CD8-positive, alpha-beta T cell (primary cell): ENCODE measurements at regions of chr3 and their contacts with region 1.

Region 1: GRCh38 chr3:47513125-47513929 is at the start of gene ELP6:
- DNase-seq: peak; percentile 92 to 99 (median 96)
- ATAC-seq: peak; percentile 91
- H3K4me3 ChIP-seq: peak within 1 kb of the TSS; percentile 85 to 99
- H3K4me3 Mint-ChIP-seq: peak within 1 kb of the TSS; percentile 98
- H3K27ac ChIP-seq: peak within 1 kb of the TSS; percentile 88 to 95
- H3K27ac Mint-ChIP-seq: peak within 1 kb of the TSS; percentile 97
- H3K4me1 ChIP-seq: peaks cover 11% of the 10 kb centered on the region
- H3K4me1 Mint-ChIP-seq: peaks cover 22% of the 10 kb centered on the region
- H3K27me3 ChIP-seq: no peaks in the 10 kb centered on the region
- H3K27me3 Mint-ChIP-seq: no peaks in the 10 kb centered on the region
- CTCF ChIP-seq: peak; percentile 66
- total RNA-seq, gene ELP6: 13.0 to 13.7 TPM

Region 2: DNA sequence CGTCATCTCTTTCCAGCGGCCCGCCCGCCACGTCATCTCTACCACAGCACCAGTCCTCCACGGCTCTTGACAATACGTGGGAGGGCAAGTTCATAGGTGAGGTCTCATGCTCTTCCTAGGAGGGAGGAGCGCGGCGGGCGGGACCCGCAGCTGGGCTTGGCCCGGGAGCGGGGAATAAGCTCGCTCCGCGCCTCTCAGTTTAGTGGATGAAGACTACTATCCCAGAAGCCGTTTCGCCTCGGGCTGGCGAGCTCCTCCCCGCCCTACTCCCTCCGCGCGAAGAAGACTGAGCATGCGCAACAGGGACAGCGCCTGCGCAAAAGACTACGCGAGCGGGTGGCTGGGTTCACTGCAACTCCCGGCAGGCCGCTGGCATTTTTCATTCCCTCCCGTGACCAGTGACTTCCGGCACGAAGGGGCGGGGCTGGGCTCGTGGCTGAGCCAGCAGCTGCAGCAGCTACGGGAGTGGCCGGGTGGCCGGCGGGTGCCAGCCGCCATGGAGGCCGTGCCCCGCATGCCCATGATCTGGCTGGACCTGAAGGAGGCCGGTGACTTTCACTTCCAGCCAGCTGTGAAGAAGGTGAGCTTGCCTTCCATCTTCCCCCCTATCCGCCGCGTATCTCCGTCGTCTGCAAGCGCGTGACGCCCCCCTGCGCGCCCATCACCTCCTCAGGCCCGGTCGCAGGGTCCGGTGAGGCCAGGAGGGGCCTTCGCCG is 132.6 kb before region 1 on chr3 and contains the start of gene PTPN23:
- CTCF ChIA-PET with region 1: no interaction called
- POLR2A ChIA-PET with region 1: interaction called, 5 read pairs
- intact Hi-C with region 1: loop called (anchors 1 kb)
- DNase-seq: peak; percentile 97 to 99 (median 99)
- ATAC-seq: peak; percentile 77
- H3K4me3 ChIP-seq: peak within 1 kb of the TSS; percentile 59 to 86
- H3K4me3 Mint-ChIP-seq: peak within 1 kb of the TSS; percentile 99
- H3K27ac ChIP-seq: peak within 1 kb of the TSS; percentile 76 to 97
- H3K27ac Mint-ChIP-seq: peak within 1 kb of the TSS; percentile 100
- H3K4me1 ChIP-seq: peaks cover 30% of the 10 kb centered on the region
- H3K4me1 Mint-ChIP-seq: peaks cover 49% of the 10 kb centered on the region
- H3K27me3 ChIP-seq: no peaks in the 10 kb centered on the region
- H3K27me3 Mint-ChIP-seq: no peaks in the 10 kb centered on the region
- CTCF ChIP-seq: no peak
- total RNA-seq, gene PTPN23: 39.2 to 48.3 TPM

Region 3: DNA sequence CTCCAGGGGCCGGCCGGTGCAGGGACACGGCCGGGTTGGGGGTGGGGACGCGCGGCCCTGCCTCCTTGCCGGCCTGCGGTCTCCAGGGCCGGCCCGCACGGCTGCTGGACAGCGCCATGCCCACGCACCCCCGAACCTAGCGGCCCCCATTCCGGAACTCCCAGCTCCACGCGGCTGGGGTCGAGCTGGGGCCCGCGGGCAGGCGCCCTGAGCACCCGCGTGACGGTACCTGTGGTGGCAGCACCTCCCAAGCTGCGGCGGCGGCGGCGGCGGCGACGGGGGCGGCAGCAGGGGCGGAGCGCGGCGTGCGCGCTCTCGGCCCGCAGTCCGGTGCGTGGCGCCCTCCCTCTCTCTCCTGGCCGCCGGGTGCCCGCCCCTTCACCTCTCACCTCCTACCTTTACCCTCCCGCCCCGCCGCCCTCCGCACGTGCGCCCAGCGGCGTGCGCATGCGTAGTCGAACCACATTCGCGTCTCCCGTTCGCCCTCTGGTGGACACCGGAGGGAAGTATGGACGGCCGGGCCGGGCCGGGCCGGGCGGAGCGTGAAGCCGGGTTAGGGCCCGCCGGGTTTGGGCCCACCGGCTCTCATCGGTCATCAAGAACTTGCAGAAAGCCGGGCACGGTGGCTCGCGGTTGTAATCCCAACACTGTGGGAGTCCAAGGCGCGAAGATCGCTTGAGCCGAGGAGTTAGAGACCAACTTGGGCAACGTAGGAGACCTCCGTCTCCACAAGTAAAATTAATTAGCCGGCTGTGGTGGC is 37.6 kb before region 1 on chr3 and contains the start of gene SCAP:
- CTCF ChIA-PET with region 1: interaction called, 6 read pairs
- POLR2A ChIA-PET with region 1: interaction called, 4 read pairs
- intact Hi-C with region 1: loop called (anchors 1 kb)
- DNase-seq: peak; percentile 90 to 98 (median 96)
- ATAC-seq: peak; percentile 90
- H3K4me3 ChIP-seq: peak within 1 kb of the TSS; percentile 58 to 83
- H3K4me3 Mint-ChIP-seq: peak within 1 kb of the TSS; percentile 93
- H3K27ac ChIP-seq: peak within 1 kb of the TSS; percentile 69 to 86
- H3K27ac Mint-ChIP-seq: peak within 1 kb of the TSS; percentile 94
- H3K4me1 ChIP-seq: peaks cover 28% of the 10 kb centered on the region
- H3K4me1 Mint-ChIP-seq: peaks cover 43% of the 10 kb centered on the region
- H3K27me3 ChIP-seq: no peaks in the 10 kb centered on the region
- H3K27me3 Mint-ChIP-seq: no peaks in the 10 kb centered on the region
- CTCF ChIP-seq: peak; percentile 97
- total RNA-seq, gene SCAP: 72.8 to 76.6 TPM

Region 4: DNA sequence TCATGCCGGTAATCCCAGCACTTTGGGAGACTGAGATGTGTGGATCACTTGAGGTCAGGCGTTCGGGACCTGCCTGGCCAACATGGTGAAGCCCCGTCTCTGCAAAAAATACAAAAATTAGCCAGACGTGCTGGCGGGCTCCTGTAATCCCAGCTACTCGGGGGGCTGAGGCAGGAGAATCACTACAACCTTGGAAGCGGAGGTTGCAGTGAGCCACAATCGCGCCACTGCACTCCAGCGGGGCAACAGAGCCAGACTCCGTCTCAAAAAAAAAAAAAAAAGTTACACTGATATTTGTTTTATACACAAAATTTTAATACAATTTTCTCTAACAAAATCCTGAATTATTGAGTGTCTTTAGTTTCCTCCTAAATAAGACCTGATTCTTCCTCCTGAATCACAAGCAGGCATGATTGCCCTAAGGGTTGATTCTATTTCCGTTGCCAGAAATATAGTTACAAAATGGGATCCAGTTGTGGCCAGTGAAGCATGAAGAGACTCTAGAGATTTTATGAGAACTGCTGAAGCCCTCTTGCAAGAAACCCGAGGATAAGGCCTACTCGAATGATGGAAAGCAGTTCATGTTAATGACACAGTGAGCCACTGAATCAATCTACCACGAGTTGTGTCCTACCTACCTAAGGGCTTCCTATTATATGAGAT is 278.0 kb after region 1 on chr3:
- CTCF ChIA-PET with region 1: no interaction called
- POLR2A ChIA-PET with region 1: no interaction called
- intact Hi-C with region 1: loop called in 1 of 2 experiments (anchors 2 kb)
- DNase-seq: no peak
- ATAC-seq: no peak
- H3K4me3 ChIP-seq: no peak overlapping the region
- H3K4me3 Mint-ChIP-seq: no peak overlapping the region
- H3K27ac ChIP-seq: no peak overlapping the region
- H3K27ac Mint-ChIP-seq: no peak overlapping the region
- H3K4me1 ChIP-seq: no peaks in the 10 kb centered on the region
- H3K4me1 Mint-ChIP-seq: peaks cover 5% of the 10 kb centered on the region
- H3K27me3 ChIP-seq: no peaks in the 10 kb centered on the region
- H3K27me3 Mint-ChIP-seq: no peaks in the 10 kb centered on the region
- CTCF ChIP-seq: no peak